ENCODE measurements at regions of chrX and their contacts with region 1.

Region 1: GRCh38 chrX:68196939-68197791 is 236.1 kb downstream of the OPHN1 start:
- DNase-seq: peak in 1 of 5 donors; percentile 16
- H3K4me3 ChIP-seq: no peak overlapping the region
- H3K27ac ChIP-seq: no peak overlapping the region
- H3K4me1 ChIP-seq: no peaks in the 10 kb centered on the region
- H3K27me3 ChIP-seq: no peaks in the 10 kb centered on the region
- CTCF ChIP-seq: peak; percentile 22 to 38 (median 37)
- EP300 ChIP-seq: no peak
- POLR2A ChIP-seq: no peak

Region 2: GRCh38 chrX:68084765-68085164 is 112.4 kb before region 1 on chrX:
- intact Hi-C with region 1: no loop called
- DNase-seq: peak in 2 of 5 donors; percentile 18 to 37
- H3K4me3 ChIP-seq: no peak overlapping the region
- H3K27ac ChIP-seq: no peak overlapping the region
- H3K4me1 ChIP-seq: no peaks in the 10 kb centered on the region
- H3K27me3 ChIP-seq: no peaks in the 10 kb centered on the region
- CTCF ChIP-seq: no peak
- EP300 ChIP-seq: no peak
- POLR2A ChIP-seq: no peak

Region 3: GRCh38 chrX:68462653-68463052 is 265.5 kb after region 1 on chrX:
- intact Hi-C with region 1: loop called (anchors 5 to 10 kb)
- DNase-seq: peak in 1 of 5 donors; percentile 22
- H3K4me3 ChIP-seq: no peak overlapping the region
- H3K27ac ChIP-seq: no peak overlapping the region
- H3K4me1 ChIP-seq: no peaks in the 10 kb centered on the region
- H3K27me3 ChIP-seq: no peaks in the 10 kb centered on the region
- CTCF ChIP-seq: peak; percentile 20 to 62 (median 54)
- EP300 ChIP-seq: no peak
- POLR2A ChIP-seq: no peak

Region 4: GRCh38 chrX:68710870-68711576 is 513.9 kb after region 1 on chrX:
- intact Hi-C with region 1: loop called in 1 of 4 experiments (anchors 10 kb)
- DNase-seq: peak in 3 of 5 donors; percentile 27 to 50 (median 31)
- H3K4me3 ChIP-seq: no peak overlapping the region
- H3K27ac ChIP-seq: no peak overlapping the region
- H3K4me1 ChIP-seq: no peaks in the 10 kb centered on the region
- H3K27me3 ChIP-seq: no peaks in the 10 kb centered on the region
- CTCF ChIP-seq: peak in 2 of 3 donors; percentile 42 to 50
- EP300 ChIP-seq: no peak
- POLR2A ChIP-seq: no peak

Measured in ovary (tissue), 10 donors.